ENCODE measurements at regions of chr3 and their contacts with region 1.

Region 1: DNA sequence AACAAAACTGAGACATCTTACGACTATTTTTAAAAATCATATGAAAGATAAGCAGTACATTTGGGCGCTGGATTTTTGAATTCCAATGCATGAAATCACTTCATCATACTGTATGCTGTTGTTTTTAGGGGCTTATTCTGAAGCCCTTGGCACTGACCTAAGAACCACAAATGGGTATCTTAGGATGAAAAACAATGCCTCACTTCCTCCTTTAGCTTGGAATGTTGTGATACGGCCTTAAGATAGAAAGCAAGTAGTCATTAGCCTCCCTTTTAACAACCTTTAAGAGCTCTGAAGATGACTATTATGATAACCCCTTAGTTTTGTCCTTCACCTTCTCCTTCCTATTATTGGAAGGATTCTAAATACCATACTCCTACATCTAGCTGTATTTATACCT is 289.8 kb downstream of the ARPP21 start:
- DNase-seq: no peak
- H3K4me3 ChIP-seq: no peak overlapping the region
- H3K27ac ChIP-seq: peak overlapping the region in 7 of 59 donors; percentile 3 to 65 (median 40)
- H3K27me3 ChIP-seq: no peaks in the 10 kb centered on the region
- CTCF ChIP-seq: no peak

Region 2: DNA sequence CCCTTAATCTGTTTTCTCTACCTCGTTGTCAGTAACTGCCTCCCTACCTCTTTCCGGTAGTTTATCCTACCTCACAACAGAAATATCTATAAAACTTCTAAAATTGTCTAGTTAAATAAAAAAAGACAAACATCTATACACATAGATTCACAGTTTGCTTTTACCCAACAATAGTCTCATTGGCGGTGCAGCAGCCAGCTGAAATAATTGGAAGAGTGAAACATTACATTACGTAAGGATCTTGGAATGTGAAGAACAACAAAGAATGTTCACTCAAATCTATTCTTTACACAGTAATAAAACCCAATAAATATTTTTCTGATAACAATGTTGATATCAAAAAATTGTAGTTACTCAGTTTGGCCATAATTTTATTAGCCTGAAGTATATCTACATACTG is 405.3 kb before region 1 on chr3:
- intact Hi-C with region 1: no loop called
- DNase-seq: no peak
- H3K4me3 ChIP-seq: no peak overlapping the region
- H3K27ac ChIP-seq: no peak overlapping the region
- H3K27me3 ChIP-seq: no peaks in the 10 kb centered on the region
- CTCF ChIP-seq: no peak

Region 3: DNA sequence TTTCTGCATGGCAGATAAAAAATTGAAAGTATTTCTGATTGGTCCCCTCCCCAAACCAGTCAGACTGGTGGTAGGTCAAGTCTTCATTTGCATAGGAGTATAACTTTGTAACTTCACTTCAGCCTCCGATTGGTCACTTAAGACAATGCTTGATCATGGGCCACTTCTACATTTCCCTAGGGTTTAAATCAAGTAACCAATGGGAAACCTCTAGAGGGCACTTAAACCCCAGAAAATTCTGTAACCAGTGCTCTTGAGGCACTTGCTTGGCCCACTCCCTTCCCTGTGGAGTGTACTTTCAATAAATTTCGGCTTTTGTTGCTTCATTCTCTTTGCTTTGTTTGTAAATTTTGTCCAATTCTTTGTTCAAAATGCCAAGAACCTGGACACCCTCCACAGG is 64.3 kb before region 1 on chr3:
- intact Hi-C with region 1: loop called in 1 of 2 experiments (anchors 10 kb)
- DNase-seq: no peak
- H3K4me3 ChIP-seq: no peak overlapping the region
- H3K27ac ChIP-seq: no peak overlapping the region
- H3K27me3 ChIP-seq: peaks cover 0 to 5% (median 0%) of the 10 kb centered on the region in 45 donors
- CTCF ChIP-seq: peak in 13 of 56 donors; percentile 9 to 46 (median 23)